ENCODE measurements at regions of chr2 and their contacts with region 1.

Region 1: DNA sequence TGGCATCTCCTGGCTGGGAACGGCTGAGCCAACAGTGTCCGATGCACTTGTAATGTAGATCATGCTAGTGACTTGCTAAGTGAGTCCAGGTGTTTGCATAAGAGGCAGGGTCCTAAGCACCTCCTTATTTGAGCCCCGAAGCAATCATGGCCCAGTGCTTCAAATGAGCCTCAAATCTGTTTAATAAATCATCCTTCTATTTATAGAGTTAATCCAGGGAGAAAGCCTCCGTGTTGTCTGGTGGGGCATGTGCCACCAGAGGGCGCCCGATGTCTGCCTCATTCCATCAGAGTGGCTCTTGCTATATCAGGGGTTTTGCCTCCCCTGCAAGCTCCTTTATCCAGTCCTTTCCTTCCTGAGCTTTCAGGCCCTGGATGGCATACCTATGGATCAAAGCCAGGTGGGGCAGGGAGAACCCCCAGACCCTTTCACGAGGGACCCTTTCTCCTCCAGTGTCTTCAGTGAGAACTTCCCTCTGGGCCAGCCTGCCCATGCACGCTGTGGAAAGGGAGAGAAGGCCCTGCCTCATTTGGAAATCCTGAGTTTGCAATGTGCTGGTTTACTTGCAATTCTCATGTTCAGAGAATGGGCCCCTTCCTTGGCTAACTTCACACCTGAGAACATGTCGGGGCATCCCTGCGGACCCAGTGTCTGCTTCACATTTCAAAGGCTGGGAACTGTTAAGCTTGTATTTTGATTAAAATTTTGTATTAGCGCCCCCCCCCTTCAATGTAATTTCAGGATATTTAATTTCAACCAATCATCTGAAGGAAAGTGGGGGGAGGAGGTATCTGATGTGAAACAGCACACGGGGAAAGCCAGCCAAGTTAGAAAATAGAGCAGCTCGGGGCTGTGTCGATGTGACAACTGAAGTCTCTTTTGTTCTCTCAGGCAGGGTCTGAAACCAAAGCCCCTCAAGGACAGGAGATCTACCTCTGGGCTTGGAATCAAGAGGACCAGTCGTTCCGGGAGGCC is 39.7 kb downstream of the RDH14 start:
- DNase-seq: peak; percentile 56 to 97 (median 84)

Region 2: DNA sequence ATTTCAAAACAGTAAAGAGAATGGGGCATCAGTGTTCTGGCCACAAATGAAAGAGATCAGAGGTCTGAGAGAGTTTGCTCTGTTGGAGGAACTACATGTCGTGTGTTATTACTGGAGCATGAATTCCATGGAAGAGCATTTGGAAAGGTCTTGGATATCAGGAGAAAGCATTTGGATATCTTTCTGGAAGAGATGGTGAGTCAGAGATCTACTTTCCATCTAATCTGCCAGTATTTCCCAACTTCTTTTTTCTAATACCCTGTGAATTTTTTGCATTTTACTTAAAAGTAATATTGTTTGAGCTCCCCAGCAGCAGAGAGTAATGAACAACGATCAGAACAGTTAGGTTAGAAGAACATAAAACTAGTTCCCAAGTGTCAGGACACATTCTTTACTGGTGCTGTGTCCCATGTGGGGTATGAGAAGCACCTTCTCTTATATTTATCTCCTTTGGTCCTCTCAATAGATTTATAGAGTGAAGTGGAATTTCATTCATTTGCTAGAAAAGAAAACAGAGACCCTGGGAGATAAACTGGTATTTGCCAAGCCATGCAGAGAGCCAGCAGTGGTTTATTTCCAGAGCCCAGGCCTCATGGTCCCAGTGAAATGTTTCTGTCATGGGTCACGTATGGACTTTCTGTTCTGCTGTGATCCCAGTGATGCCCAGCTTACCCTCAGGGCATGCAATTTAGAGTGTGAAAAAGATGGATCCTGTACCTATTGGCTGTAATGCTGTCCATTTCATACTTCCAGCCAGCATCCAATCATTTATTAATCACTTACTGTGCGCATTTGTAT is 199.4 kb after region 1 on chr2:
- intact Hi-C with region 1: no loop called
- DNase-seq: no peak

Region 3: GRCh38 chr2:18749912-18750526 is 229.3 kb after region 1 on chr2:
- intact Hi-C with region 1: loop called (anchors 10 kb)
- DNase-seq: peak in 5 of 10 donors; percentile 16 to 63 (median 56)

Region 4: DNA sequence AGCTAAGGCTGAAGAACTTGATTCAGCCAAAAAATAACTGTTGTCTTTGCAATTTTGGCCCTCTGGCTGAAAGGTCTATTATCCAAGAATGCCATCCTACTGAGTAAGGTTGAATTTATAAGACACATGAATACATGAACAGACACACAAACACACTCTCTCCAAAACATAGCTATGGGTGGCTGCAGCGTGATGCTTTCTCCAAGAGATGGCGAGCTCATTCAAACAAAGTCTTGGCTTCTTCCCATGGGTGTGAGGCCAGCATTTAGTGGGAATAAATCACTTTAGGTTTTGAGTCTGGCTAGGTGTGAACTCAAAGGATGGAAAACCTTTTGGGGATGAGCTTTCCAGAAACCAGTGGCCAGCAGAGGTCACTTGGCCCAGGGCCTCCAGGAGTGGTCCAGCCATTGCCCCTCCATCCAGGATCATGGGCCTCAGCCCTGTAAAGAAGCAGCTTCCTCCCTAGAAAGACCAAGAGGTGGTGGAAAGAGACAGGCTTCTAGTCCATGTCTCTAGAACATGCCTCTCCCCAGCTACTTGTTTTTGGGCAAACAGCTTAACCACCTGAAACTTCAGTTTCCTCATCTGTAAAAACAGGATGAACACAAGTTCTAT is 848.7 kb after region 1 on chr2:
- intact Hi-C with region 1: loop called (anchors 5 kb)
- DNase-seq: no peak